B cell (primary cell): ENCODE measurements at regions of chr17 and their contacts with region 1.

Region 1: GRCh38 chr17:50200457-50201275 is 765 bp downstream of the COL1A1 start:
- DNase-seq: peak; percentile 90
- ATAC-seq: peak; percentile 79
- H3K4me3 ChIP-seq: peak overlapping the region; percentile 15 to 59 (median 48)
- H3K4me3 Mint-ChIP-seq: peak overlapping the region; percentile 85
- H3K27ac ChIP-seq: no peak overlapping the region
- H3K27ac Mint-ChIP-seq: peak overlapping the region; percentile 21
- H3K4me1 ChIP-seq: peaks cover 18 to 23% of the 10 kb centered on the region in 2 donors
- H3K4me1 Mint-ChIP-seq: peaks cover 27% of the 10 kb centered on the region
- H3K27me3 ChIP-seq: peaks cover 0 to 49% (median 11%) of the 10 kb centered on the region in 4 experiments
- H3K27me3 Mint-ChIP-seq: peaks cover 50% of the 10 kb centered on the region
- CTCF ChIP-seq: peak; percentile 100

Region 2: DNA sequence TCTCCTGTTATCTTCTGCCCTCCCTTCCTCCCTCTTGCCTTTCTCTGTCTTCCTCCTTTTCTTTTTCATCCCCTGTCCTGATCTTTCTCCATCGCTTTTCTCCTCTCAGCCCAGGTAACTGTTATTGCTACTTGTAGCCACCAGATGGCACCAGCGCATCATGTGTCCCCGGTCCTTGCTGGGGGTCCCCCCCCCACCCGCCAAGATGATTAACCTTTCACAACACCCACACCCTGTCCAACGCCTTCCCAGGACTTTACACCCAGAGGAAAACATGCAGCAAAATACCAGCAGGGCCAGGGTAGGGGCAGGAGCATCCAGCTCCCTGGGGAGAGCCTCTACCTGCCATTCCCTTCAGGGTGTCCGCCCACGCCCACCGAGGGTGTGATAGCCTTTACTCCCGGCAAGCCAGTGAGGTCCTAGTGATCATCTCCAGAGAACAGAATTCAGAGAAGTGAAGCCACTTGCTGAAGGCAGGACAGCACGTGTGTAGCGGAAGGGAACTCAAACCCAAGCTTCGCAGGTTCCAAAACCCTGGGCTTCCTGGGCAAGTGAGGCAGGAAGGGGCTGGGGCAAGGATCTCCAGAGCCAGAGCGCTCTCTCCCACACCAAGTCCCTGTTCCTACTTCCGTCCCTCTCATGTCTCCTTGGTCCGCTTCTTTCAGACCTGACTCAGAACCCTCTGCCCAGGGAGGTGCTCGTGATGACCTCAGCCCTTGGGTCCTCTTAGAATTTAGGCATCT is 339.3 kb before region 1 on chr17:
- CTCF ChIA-PET with region 1: no interaction called
- POLR2A ChIA-PET with region 1: no interaction called
- intact Hi-C with region 1: loop called (anchors 1 kb)
- DNase-seq: peak; percentile 78
- ATAC-seq: peak; percentile 76
- H3K4me3 ChIP-seq: no peak overlapping the region
- H3K4me3 Mint-ChIP-seq: no peak overlapping the region
- H3K27ac ChIP-seq: no peak overlapping the region
- H3K27ac Mint-ChIP-seq: no peak overlapping the region
- H3K4me1 ChIP-seq: no peaks in the 10 kb centered on the region
- H3K4me1 Mint-ChIP-seq: peaks cover 3% of the 10 kb centered on the region
- H3K27me3 ChIP-seq: peaks cover 0 to 31% (median 3%) of the 10 kb centered on the region in 4 experiments
- H3K27me3 Mint-ChIP-seq: peaks cover 34% of the 10 kb centered on the region
- CTCF ChIP-seq: peak; percentile 93

Region 3: GRCh38 chr17:50049636-50050035 is 151.0 kb before region 1 on chr17:
- CTCF ChIA-PET with region 1: no interaction called
- POLR2A ChIA-PET with region 1: no interaction called
- intact Hi-C with region 1: no loop called
- DNase-seq: no peak
- ATAC-seq: no peak
- H3K4me3 ChIP-seq: no peak overlapping the region
- H3K4me3 Mint-ChIP-seq: no peak overlapping the region
- H3K27ac ChIP-seq: no peak overlapping the region
- H3K27ac Mint-ChIP-seq: no peak overlapping the region
- H3K4me1 ChIP-seq: no peaks in the 10 kb centered on the region
- H3K4me1 Mint-ChIP-seq: no peaks in the 10 kb centered on the region
- H3K27me3 ChIP-seq: peaks cover 0 to 19% (median 2%) of the 10 kb centered on the region in 4 experiments
- H3K27me3 Mint-ChIP-seq: peaks cover 29% of the 10 kb centered on the region
- CTCF ChIP-seq: no peak

Region 4: DNA sequence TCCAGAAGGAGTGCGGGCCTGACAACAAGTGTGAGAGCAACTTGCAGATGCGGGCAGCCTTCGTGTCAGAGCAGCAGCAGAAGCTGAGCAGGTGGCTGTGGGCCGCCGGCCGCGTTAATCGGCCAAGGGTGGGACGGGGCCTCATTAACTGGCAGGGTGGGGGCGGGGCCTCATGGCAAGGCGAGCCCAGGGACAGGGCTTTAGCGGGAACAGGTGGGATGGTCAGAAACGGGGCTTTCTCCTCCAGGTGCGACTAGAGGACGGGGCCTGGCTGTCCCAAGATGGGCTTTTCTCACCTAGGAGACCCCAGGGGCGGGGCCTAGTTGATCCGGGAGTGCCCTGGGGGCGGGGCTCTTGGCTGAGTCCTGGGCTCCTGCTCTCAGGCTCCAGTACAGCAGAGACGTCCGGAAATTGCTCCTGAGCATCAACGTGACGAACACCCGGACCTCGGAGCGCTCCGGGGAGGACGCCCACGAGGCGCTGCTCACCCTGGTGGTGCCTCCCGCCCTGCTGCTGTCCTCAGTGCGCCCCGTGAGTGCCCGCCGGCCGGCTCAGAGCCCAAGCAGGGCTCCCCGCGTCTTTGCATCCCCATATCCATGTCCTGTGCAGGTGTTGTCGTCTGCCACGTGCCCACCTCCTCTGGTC is 124.0 kb before region 1 on chr17:
- CTCF ChIA-PET with region 1: no interaction called
- POLR2A ChIA-PET with region 1: no interaction called
- intact Hi-C with region 1: no loop called
- DNase-seq: no peak
- ATAC-seq: no peak
- H3K4me3 ChIP-seq: no peak overlapping the region
- H3K4me3 Mint-ChIP-seq: no peak overlapping the region
- H3K27ac ChIP-seq: no peak overlapping the region
- H3K27ac Mint-ChIP-seq: no peak overlapping the region
- H3K4me1 ChIP-seq: peaks cover 7 to 21% of the 10 kb centered on the region in 2 donors
- H3K4me1 Mint-ChIP-seq: peaks cover 20% of the 10 kb centered on the region
- H3K27me3 ChIP-seq: no peaks in the 10 kb centered on the region
- H3K27me3 Mint-ChIP-seq: no peaks in the 10 kb centered on the region
- CTCF ChIP-seq: no peak

Region 5: DNA sequence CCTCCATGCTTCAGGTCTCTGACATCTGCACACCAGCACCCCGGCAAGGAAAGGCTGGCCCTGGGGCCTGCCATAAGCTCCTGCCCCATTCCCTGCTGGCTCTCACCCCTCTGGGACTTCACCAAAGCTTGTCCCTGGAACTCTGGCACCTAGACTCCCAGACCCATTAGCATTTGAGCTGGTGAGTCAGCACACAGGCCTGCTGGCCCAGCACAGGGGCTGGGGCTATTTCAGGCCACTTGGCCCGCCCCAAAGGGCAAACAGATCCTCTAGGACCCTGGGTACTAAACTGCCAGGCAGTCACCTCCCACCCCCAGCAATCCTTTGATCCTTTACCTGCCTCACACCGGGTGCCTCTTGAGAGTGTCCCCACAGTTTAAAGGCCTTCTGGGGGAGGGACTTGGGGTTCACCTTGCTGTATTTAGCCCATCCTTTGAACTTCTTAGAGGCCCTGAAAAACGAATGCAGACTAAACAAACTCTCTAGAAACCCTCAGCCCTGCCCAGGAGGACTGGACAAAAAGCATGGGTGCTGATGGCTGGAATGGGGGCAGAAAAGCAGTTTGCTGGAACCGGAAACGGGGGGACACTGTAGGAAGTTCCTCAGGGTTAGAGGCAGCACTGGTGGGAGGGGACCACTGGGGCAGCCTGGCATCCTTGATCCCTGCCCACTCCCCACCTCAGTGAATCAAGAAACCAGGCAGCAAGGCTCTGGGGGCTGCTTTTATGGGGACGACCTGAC is 67.5 kb before region 1 on chr17:
- CTCF ChIA-PET with region 1: no interaction called
- POLR2A ChIA-PET with region 1: no interaction called
- intact Hi-C with region 1: no loop called
- DNase-seq: no peak
- ATAC-seq: no peak
- H3K4me3 ChIP-seq: no peak overlapping the region
- H3K4me3 Mint-ChIP-seq: no peak overlapping the region
- H3K27ac ChIP-seq: peak overlapping the region in 1 of 2 donors; percentile 50
- H3K27ac Mint-ChIP-seq: peak overlapping the region; percentile 37
- H3K4me1 ChIP-seq: peaks cover 21 to 28% of the 10 kb centered on the region in 2 donors
- H3K4me1 Mint-ChIP-seq: peaks cover 31% of the 10 kb centered on the region
- H3K27me3 ChIP-seq: peaks cover 0 to 20% (median 7%) of the 10 kb centered on the region in 4 experiments
- H3K27me3 Mint-ChIP-seq: peaks cover 10% of the 10 kb centered on the region
- CTCF ChIP-seq: no peak

Region 6: DNA sequence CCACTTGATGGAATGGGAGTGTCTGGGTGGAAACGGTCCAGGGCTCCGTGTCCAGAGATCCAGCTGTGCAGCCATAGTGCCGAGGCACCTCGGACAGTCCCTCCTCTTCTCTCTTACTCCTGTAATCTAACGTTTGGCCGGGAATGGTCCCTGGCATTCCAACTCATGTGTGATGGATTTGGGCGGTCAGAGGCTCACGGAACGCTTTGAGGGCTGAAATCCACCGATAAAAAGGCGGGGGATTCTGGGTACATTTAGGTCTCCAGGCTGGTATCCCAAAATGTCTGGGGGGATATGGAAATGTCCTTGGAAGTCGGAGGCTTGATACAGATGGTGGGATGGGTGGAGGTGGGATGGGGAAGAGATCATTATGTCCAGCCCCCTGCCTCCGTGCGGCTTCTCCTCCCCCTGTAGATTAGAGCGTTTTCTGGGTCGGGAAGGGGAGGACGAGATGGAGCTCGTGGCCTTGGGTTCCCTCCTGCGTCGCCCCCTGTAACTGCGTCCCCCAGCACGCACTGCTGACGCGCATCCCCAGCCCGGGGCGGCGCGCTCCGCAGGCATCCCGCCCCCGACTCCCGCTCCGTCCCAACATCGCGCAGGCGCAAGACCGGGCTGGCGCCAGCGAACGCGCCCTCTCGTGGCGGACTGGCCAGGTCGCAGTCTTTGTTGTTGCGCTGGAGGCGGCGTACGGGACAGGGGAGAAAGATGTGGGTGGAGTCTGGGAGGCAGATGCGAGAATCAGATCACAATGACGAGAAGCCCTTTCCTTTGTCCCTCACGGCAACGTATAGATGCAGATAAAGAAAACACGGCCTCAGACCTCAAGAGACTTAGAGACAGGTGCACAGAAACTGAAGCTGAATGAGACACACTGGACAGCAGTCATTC is 39.4 kb before region 1 on chr17:
- CTCF ChIA-PET with region 1: interaction called, 8 read pairs
- POLR2A ChIA-PET with region 1: no interaction called
- intact Hi-C with region 1: loop called (anchors 1 kb)
- DNase-seq: peak; percentile 93
- ATAC-seq: peak; percentile 92
- H3K4me3 ChIP-seq: peak overlapping the region; percentile 52 to 68 (median 66)
- H3K4me3 Mint-ChIP-seq: peak overlapping the region; percentile 80
- H3K27ac ChIP-seq: no peak overlapping the region
- H3K27ac Mint-ChIP-seq: peak overlapping the region; percentile 72
- H3K4me1 ChIP-seq: peaks cover 36 to 41% of the 10 kb centered on the region in 2 donors
- H3K4me1 Mint-ChIP-seq: peaks cover 38% of the 10 kb centered on the region
- H3K27me3 ChIP-seq: no peaks in the 10 kb centered on the region
- H3K27me3 Mint-ChIP-seq: no peaks in the 10 kb centered on the region
- CTCF ChIP-seq: peak; percentile 97

Region 7: DNA sequence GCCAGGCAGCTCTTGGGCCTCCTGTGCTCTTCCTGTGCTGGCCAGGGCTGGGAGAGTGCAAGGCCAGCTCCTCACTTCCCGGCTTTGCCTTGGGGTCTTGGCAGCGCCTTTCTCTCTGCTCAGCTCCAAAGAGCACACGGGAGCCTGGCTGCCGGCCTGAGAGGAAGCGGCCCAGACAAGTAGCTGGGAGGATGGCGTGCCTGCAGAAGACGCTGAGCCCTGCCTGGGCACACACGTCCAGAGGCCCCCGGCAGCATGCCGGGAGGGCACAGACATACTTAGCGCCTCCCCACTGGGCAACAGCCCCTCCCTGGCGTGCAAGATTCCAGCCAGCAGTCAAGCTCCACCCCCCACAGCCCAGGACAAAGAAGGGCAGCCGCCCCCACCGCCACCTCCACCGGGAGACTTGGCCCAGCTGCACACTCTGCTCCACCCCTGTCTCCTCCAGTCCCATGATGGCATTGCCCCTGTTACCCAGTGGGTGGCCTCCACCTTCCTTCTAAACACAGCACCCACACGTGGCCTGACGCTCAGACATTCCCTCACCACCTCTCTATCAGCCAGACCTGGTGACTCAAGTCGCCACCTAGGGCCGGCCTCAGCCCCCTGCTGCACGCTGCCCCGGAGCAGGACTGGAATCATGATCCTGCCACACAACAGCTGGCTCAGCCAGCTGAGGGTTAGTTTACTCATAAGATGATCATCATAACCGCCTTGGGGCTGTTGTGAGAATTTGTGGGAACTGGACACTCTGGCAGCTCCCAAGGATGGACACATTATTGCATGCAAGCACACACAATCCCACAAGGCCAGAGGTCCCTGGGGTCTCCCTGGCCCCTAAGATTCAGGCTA is 22.5 kb before region 1 on chr17:
- CTCF ChIA-PET with region 1: interaction called, 22 read pairs
- POLR2A ChIA-PET with region 1: no interaction called
- intact Hi-C with region 1: loop called (anchors 2 kb)
- DNase-seq: peak; percentile 75
- ATAC-seq: peak; percentile 98
- H3K4me3 ChIP-seq: peak overlapping the region in 2 of 5 experiments; percentile 25 to 29
- H3K4me3 Mint-ChIP-seq: peak overlapping the region; percentile 59
- H3K27ac ChIP-seq: no peak overlapping the region
- H3K27ac Mint-ChIP-seq: no peak overlapping the region
- H3K4me1 ChIP-seq: peaks cover 7 to 14% of the 10 kb centered on the region in 2 donors
- H3K4me1 Mint-ChIP-seq: peaks cover 21% of the 10 kb centered on the region
- H3K27me3 ChIP-seq: no peaks in the 10 kb centered on the region
- H3K27me3 Mint-ChIP-seq: no peaks in the 10 kb centered on the region
- CTCF ChIP-seq: peak; percentile 60

Region 8: GRCh38 chr17:50269477-50270434 is 69.1 kb after region 1 on chr17:
- CTCF ChIA-PET with region 1: interaction called, 100 read pairs
- POLR2A ChIA-PET with region 1: interaction called, 3 read pairs
- intact Hi-C with region 1: loop called (anchors 1 kb)
- DNase-seq: peak; percentile 60
- ATAC-seq: peak; percentile 56
- H3K4me3 ChIP-seq: no peak overlapping the region
- H3K4me3 Mint-ChIP-seq: no peak overlapping the region
- H3K27ac ChIP-seq: no peak overlapping the region
- H3K27ac Mint-ChIP-seq: no peak overlapping the region
- H3K4me1 ChIP-seq: peaks cover 7 to 8% of the 10 kb centered on the region in 2 donors
- H3K4me1 Mint-ChIP-seq: peaks cover 7% of the 10 kb centered on the region
- H3K27me3 ChIP-seq: peaks cover 0 to 28% (median 9%) of the 10 kb centered on the region in 4 experiments
- H3K27me3 Mint-ChIP-seq: peaks cover 27% of the 10 kb centered on the region
- CTCF ChIP-seq: peak; percentile 76